Common myeloid progenitor, CD34-positive (primary cell): ENCODE measurements at regions of chr21 and their contacts with region 1.

Region 1: GRCh38 chr21:29091032-29091431 is 17.6 kb upstream of the CCT8 start:
- DNase-seq: no peak
- H3K4me3 ChIP-seq: no peak overlapping the region
- H3K27ac ChIP-seq: no peak overlapping the region
- H3K4me1 ChIP-seq: peaks cover 0 to 7% (median 0%) of the 10 kb centered on the region in 4 experiments
- H3K27me3 ChIP-seq: no peaks in the 10 kb centered on the region

Region 2: DNA sequence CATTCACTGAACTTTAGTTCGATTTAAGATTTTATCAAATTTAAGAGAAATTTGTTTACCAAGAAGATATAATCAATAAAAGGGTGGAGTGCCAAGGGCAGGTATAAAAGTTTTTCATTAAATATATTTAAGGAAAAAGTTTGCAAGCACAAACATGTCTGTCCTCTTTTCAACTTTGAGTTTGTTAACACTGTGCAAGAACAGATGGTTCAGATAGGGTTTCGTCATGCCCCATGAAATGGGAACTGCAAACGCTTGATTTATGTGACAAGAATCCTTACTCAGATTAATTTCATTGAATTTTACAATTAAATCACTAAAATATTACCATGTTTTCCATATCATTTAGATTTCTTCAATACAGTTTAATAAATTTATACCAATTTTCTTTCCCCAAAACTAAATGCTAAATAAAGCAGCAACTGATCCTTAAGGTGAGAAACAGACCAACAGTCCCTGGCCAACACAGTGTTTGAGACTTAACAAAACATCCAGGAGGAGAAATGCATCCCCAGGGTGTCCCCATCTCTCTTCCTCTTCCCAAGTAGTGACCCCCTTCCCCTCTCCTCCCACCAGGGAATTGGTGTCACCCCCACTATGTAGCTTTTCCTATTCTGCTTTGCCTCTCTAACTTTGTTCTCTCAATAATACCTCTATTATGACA is 391.3 kb before region 1 on chr21:
- CTCF ChIA-PET with region 1: no interaction called
- POLR2A ChIA-PET with region 1: no interaction called
- DNase-seq: peak; percentile 12 to 72 (median 54)
- H3K4me3 ChIP-seq: no peak overlapping the region
- H3K27ac ChIP-seq: no peak overlapping the region
- H3K4me1 ChIP-seq: no peaks in the 10 kb centered on the region
- H3K27me3 ChIP-seq: no peaks in the 10 kb centered on the region

Region 3: DNA sequence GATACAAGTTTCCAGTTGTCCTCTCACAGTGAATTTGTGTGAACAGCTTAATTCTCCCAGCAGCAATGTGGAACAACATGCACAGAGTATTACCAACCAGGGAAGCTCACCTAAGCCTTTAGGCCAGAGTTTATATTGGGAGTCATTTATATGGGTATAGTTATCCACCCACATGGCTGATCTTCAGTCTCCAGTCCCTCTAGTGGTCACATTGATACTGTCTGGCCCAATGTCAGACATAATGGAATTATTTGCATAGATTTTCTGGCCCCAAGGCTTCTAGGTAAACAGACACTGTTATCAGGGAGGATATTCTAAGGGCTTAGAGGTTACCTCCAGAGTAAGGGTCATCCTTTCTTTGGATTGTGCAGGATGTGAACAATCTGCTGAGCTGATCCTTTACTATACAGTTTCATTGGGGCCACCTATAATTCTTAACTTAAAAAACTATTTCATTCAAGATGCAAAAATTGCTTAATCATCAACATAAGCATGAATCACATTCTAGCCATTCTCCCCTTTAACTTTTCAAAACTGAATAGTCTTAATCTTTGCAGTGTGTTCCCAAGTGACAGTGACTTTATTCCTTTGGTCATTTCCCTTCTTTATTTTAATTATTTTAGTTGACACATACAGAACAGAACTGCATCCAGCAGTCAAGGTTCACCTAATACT is 309.3 kb before region 1 on chr21:
- CTCF ChIA-PET with region 1: no interaction called
- POLR2A ChIA-PET with region 1: no interaction called
- DNase-seq: peak in 2 of 3 donors; percentile 7 to 11
- H3K4me3 ChIP-seq: no peak overlapping the region
- H3K27ac ChIP-seq: no peak overlapping the region
- H3K4me1 ChIP-seq: no peaks in the 10 kb centered on the region
- H3K27me3 ChIP-seq: no peaks in the 10 kb centered on the region

Region 4: DNA sequence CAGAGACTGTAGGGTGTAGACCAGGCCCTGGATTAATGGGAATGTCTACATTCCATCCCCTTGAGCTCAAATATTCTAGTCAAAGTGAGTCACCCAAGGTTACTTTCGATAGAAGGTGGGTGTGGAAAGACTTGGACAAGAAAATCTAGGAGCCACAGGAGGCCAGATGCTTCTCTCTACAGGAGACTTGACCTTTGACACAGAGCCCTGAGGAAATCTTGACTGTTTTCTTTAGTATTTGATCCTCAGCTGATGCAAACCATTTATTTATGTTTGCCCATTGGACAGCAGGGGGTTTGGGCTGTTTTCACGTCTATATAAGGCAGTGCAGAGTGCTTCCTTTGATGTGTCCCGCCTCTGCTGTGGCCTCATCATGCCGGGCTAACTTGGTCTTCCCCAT is 23.7 kb after region 1 on chr21:
- CTCF ChIA-PET with region 1: no interaction called
- POLR2A ChIA-PET with region 1: no interaction called
- DNase-seq: no peak
- H3K4me3 ChIP-seq: no peak overlapping the region
- H3K27ac ChIP-seq: no peak overlapping the region
- H3K4me1 ChIP-seq: peaks cover 0 to 2% (median 0%) of the 10 kb centered on the region in 4 experiments
- H3K27me3 ChIP-seq: no peaks in the 10 kb centered on the region

Region 5: GRCh38 chr21:29306920-29307319 is 215.9 kb after region 1 on chr21:
- CTCF ChIA-PET with region 1: no interaction called
- POLR2A ChIA-PET with region 1: no interaction called
- DNase-seq: no peak
- H3K4me3 ChIP-seq: no peak overlapping the region
- H3K27ac ChIP-seq: no peak overlapping the region
- H3K4me1 ChIP-seq: peaks cover 13 to 39% (median 24%) of the 10 kb centered on the region in 4 experiments
- H3K27me3 ChIP-seq: no peaks in the 10 kb centered on the region

Region 6: DNA sequence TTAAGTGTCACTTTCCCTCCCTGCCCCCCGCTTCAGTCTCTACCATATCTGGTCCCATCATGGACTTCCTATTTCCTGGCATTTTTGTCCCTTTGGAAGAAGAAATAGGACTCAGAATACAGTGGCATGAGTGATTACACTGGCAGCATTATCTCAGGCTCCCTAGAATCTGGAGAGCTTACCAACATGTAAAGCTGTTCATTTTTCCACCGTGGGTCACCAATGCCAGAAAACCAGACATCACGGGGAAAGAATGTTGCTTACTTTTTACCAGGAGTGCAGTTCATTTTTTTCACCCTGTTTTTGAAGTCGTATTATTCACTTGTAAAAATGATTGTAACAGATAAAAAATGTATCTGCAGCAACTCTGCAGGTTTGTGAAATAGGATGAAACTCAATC is 252.5 kb after region 1 on chr21:
- CTCF ChIA-PET with region 1: interaction called, 10 read pairs
- POLR2A ChIA-PET with region 1: no interaction called
- DNase-seq: no peak
- H3K4me3 ChIP-seq: no peak overlapping the region
- H3K27ac ChIP-seq: no peak overlapping the region
- H3K4me1 ChIP-seq: peaks cover 4 to 19% (median 7%) of the 10 kb centered on the region in 4 experiments
- H3K27me3 ChIP-seq: no peaks in the 10 kb centered on the region